ENCODE measurements at regions of chr16 and their contacts with region 1.

Region 1: GRCh38 chr16:69924777-69925191 is 26.4 kb upstream of the CLEC18A start:
- DNase-seq: no peak
- ATAC-seq: peak in 1 of 4 donors; percentile 20
- H3K4me3 ChIP-seq: no peak overlapping the region
- H3K27ac ChIP-seq: no peak overlapping the region
- H3K4me1 ChIP-seq: no peaks in the 10 kb centered on the region
- H3K27me3 ChIP-seq: no peaks in the 10 kb centered on the region
- CTCF ChIP-seq: no peak
- POLR2A ChIP-seq: no peak

Region 2: GRCh38 chr16:69796351-69797118 is 128.2 kb before region 1 on chr16:
- intact Hi-C with region 1: loop called in 1 of 2 experiments (anchors 5 kb)
- DNase-seq: no peak
- ATAC-seq: peak; percentile 93 to 97 (median 94)
- H3K4me3 ChIP-seq: no peak overlapping the region
- H3K27ac ChIP-seq: no peak overlapping the region
- H3K4me1 ChIP-seq: no peaks in the 10 kb centered on the region
- H3K27me3 ChIP-seq: no peaks in the 10 kb centered on the region
- CTCF ChIP-seq: peak; percentile 89 to 94 (median 91)
- POLR2A ChIP-seq: no peak

Region 3: GRCh38 chr16:69859105-69859989 is 65.4 kb before region 1 on chr16:
- intact Hi-C with region 1: loop called in 1 of 2 experiments (anchors 10 kb)
- DNase-seq: no peak
- ATAC-seq: peak; percentile 74 to 82 (median 80)
- H3K4me3 ChIP-seq: no peak overlapping the region
- H3K27ac ChIP-seq: peak overlapping the region in 1 of 3 donors; percentile 30
- H3K4me1 ChIP-seq: peaks cover 0 to 30% (median 7%) of the 10 kb centered on the region in 4 donors
- H3K27me3 ChIP-seq: no peaks in the 10 kb centered on the region
- CTCF ChIP-seq: peak in 3 of 4 donors; percentile 9 to 25 (median 25)
- POLR2A ChIP-seq: no peak